CD4-positive, alpha-beta T cell (primary cell): ENCODE measurements at regions of chr3 and their contacts with region 1.

Region 1: GRCh38 chr3:99817437-99818240 is at the start of gene CMSS1:
- DNase-seq: peak; percentile 90 to 98 (median 96)
- ATAC-seq: peak; percentile 80
- H3K4me3 ChIP-seq: peak within 1 kb of the TSS; percentile 71
- H3K4me3 Mint-ChIP-seq: peak within 1 kb of the TSS; percentile 97
- H3K27ac ChIP-seq: peak within 1 kb of the TSS; percentile 76 to 86
- H3K27ac Mint-ChIP-seq: peak within 1 kb of the TSS; percentile 100
- H3K4me1 ChIP-seq: peaks cover 15% of the 10 kb centered on the region
- H3K4me1 Mint-ChIP-seq: peaks cover 48% of the 10 kb centered on the region
- H3K27me3 ChIP-seq: no peaks in the 10 kb centered on the region
- H3K27me3 Mint-ChIP-seq: no peaks in the 10 kb centered on the region
- CTCF ChIP-seq: no peak
- total RNA-seq, gene CMSS1: 12.2 TPM

Region 2: DNA sequence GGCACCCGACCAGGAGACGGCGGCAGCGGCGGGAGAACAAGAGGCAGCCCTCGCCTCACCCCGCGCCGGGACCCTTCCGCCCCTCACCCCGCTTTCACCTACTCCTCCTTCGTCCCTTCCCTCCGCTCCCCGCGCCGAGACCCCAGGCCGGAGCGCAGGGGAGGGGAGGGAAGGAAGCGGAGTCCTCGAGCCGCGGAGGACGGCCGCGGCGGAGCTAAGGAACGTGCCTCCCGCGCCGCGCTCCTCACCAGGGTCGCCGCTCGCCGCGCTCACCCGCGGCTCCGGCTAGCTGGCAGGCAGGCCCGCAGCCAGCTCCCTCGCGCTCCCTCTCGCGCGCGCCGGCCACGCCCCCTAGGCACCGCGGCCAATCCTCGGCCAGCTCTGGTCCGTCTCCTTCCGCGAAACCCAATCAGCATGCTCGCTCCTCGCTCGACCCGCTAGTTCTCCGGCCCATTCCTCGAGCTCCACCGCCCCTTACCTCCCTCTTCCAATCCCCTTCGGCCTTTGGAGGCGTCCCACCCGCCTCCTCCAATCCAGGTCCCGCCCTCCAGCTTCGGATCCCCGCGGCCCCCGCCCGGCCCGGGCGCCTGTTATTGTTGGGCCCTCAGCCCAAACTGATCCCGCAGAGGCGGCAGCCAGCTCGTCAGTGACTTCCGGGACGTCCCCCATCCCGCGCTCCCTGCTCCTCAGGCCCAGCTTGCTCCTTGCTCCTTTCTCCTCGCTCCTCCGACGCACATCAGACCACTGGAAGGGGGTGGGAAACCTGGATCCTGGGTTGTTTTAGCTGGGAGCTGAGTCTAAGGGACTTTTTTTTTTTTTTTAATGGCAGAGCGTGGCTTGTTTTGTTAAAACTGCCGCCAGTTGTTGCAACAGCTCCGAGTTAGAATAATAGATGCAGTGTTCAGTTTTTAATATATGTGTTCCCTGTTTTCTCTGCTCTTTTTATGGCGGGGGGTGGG is 916.0 kb before region 1 on chr3 and contains the start of gene DCBLD2:
- CTCF ChIA-PET with region 1: no interaction called
- POLR2A ChIA-PET with region 1: interaction called, 6 read pairs
- intact Hi-C with region 1: loop called (anchors 5 kb)
- DNase-seq: peak; percentile 79 to 96 (median 88)
- ATAC-seq: peak; percentile 98
- H3K4me3 ChIP-seq: peak within 1 kb of the TSS; percentile 67
- H3K4me3 Mint-ChIP-seq: peak within 1 kb of the TSS; percentile 93
- H3K27ac ChIP-seq: peak within 1 kb of the TSS in 1 of 2 donors; percentile 45
- H3K27ac Mint-ChIP-seq: peak within 1 kb of the TSS; percentile 76
- H3K4me1 ChIP-seq: peaks cover 13% of the 10 kb centered on the region
- H3K4me1 Mint-ChIP-seq: peaks cover 26% of the 10 kb centered on the region
- H3K27me3 ChIP-seq: peaks cover 0 to 2% of the 10 kb centered on the region in 2 experiments
- H3K27me3 Mint-ChIP-seq: peaks cover 12% of the 10 kb centered on the region
- CTCF ChIP-seq: no peak
- total RNA-seq, gene DCBLD2: 2.2 to 2.5 TPM

Region 3: DNA sequence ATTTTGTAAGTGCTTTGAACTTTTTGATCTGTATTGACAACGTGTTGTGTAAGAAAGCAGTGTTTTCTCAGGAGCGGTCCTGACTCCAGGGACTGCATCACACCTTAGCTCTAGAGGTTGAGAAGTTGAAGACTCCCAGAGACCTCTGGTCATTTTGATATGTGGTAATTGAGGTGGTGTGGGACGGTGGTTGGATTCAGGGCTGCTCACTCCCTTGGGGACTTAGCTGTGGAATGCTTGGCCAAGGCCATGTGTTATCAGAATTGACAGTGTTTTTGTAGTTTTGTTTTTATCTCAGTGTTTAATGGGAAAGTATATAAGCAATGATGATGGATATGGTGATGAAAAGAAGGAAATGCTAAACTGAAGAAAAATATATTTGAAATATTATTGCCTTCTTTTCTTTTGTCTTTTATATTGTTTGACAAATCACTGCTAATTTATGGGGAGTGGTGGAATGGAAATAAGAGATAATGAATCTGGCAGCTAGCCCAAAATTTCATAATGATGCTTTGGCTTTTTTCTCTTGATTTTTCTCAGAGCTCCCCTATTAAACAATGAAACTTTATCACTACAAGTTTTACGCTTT is 16.1 kb after region 1 on chr3:
- CTCF ChIA-PET with region 1: interaction called, 11 read pairs
- POLR2A ChIA-PET with region 1: interaction called, 6 read pairs
- intact Hi-C with region 1: loop called in 1 of 2 experiments (anchors 1 kb)
- DNase-seq: no peak
- ATAC-seq: no peak
- H3K4me3 ChIP-seq: no peak overlapping the region
- H3K4me3 Mint-ChIP-seq: no peak overlapping the region
- H3K27ac ChIP-seq: no peak overlapping the region
- H3K27ac Mint-ChIP-seq: no peak overlapping the region
- H3K4me1 ChIP-seq: no peaks in the 10 kb centered on the region
- H3K4me1 Mint-ChIP-seq: no peaks in the 10 kb centered on the region
- H3K27me3 ChIP-seq: no peaks in the 10 kb centered on the region
- H3K27me3 Mint-ChIP-seq: no peaks in the 10 kb centered on the region
- CTCF ChIP-seq: no peak

Region 4: DNA sequence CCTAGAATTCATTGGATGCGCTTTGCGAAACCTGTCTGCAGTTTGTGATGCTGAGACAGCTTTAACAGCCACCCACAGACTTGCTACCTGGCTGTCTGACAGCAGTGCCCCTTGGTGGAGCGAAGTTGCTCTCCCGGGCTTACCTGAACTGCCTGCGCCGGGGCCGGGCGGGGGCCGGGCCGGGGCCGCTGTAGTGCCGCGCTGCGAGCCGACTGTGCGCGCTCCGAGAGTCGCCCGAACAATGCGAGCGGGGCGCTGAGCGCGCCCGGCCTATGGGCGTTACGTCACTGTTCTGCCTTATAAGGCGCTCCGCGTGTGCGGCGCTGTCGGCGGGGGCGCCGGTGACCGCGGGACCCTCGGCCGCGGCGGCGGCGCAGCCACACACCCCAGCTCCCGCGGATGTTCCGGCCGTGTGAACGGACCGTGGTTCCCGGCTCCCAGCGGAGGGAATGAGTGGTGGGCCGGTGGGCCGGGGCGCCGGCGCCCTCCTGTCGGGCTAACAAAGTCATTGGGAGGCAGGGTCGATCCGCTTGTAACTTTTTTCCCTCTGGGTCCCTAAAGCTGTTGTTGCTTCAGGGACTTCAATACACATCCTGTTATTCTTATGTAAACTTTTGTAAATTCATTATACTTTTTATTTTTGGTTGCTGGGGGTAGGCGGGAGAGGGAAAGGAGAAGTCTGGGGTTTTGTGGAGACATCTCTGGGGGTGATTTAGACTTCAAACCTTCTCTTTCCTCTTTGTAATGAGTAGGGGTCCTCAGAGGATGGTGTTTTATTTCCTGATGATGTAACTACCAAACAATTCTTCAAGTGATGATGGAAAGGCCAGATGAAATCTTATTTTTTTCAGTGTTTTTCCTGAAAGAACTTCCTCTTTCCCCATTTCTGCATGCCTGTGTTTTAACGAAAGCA is 58.5 kb after region 1 on chr3:
- CTCF ChIA-PET with region 1: no interaction called
- POLR2A ChIA-PET with region 1: interaction called, 4 read pairs
- intact Hi-C with region 1: loop called (anchors 5 kb)
- DNase-seq: peak; percentile 38 to 86 (median 57)
- ATAC-seq: peak; percentile 95
- H3K4me3 ChIP-seq: peak overlapping the region; percentile 61
- H3K4me3 Mint-ChIP-seq: peak overlapping the region; percentile 83
- H3K27ac ChIP-seq: no peak overlapping the region
- H3K27ac Mint-ChIP-seq: peak overlapping the region; percentile 64
- H3K4me1 ChIP-seq: peaks cover 5% of the 10 kb centered on the region
- H3K4me1 Mint-ChIP-seq: peaks cover 32% of the 10 kb centered on the region
- H3K27me3 ChIP-seq: no peaks in the 10 kb centered on the region
- H3K27me3 Mint-ChIP-seq: no peaks in the 10 kb centered on the region
- CTCF ChIP-seq: no peak

Region 5: GRCh38 chr3:99895703-99896441 is 78.2 kb after region 1 on chr3:
- CTCF ChIA-PET with region 1: no interaction called
- POLR2A ChIA-PET with region 1: no interaction called
- intact Hi-C with region 1: no loop called
- DNase-seq: peak in 3 of 14 experiments; percentile 12 to 55 (median 41)
- ATAC-seq: no peak
- H3K4me3 ChIP-seq: no peak overlapping the region
- H3K4me3 Mint-ChIP-seq: no peak overlapping the region
- H3K27ac ChIP-seq: no peak overlapping the region
- H3K27ac Mint-ChIP-seq: no peak overlapping the region
- H3K4me1 ChIP-seq: no peaks in the 10 kb centered on the region
- H3K4me1 Mint-ChIP-seq: peaks cover 15% of the 10 kb centered on the region
- H3K27me3 ChIP-seq: no peaks in the 10 kb centered on the region
- H3K27me3 Mint-ChIP-seq: no peaks in the 10 kb centered on the region
- CTCF ChIP-seq: no peak

Region 6: DNA sequence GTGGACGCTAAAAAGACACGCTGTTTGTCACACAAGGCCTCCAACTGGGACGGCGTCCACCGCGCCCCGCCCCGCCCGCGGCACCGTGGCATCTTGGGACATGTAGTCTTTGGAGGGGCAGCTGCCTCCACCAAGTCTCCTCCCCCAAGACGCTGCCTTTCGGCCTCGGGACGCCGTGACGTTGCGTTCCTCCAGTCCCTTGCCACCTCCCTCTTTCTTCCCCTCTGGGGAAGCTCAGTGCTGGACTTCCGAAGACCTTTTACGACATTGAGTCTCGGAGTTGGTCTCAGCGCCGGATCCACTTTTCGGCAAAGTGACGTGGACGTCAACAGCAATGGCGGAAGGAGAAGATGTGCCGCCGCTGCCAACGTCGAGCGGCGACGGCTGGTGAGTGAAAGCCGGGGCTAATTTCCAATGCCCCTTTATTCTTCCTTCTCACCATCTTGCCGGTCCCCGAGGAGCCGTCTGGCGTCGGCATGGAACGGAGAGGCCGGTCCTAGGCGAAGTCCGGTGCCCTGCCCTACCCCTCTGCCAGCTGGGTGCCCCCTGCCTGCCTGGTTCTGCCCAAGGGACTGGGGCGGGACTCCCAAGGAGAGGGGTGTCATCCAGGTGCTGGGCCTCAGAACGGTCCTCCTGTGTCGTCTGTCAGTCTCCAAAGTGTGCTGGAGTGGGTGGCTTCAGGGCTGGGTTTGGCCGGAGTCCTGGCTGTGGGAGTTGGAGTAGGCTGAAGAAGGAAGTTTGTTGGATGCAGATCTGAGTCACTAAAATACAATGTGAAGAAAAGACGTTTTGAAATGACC is 443.2 kb after region 1 on chr3 and contains the start of gene TBC1D23:
- CTCF ChIA-PET with region 1: no interaction called
- POLR2A ChIA-PET with region 1: interaction called, 21 read pairs
- intact Hi-C with region 1: loop called (anchors 5 kb)
- DNase-seq: peak; percentile 93 to 99 (median 96)
- ATAC-seq: peak; percentile 99
- H3K4me3 ChIP-seq: peak within 1 kb of the TSS; percentile 96
- H3K4me3 Mint-ChIP-seq: peak within 1 kb of the TSS; percentile 96
- H3K27ac ChIP-seq: peak within 1 kb of the TSS; percentile 78 to 97
- H3K27ac Mint-ChIP-seq: peak within 1 kb of the TSS; percentile 94
- H3K4me1 ChIP-seq: peaks cover 26% of the 10 kb centered on the region
- H3K4me1 Mint-ChIP-seq: peaks cover 64% of the 10 kb centered on the region
- H3K27me3 ChIP-seq: no peaks in the 10 kb centered on the region
- H3K27me3 Mint-ChIP-seq: no peaks in the 10 kb centered on the region
- CTCF ChIP-seq: no peak
- total RNA-seq, gene TBC1D23: 31.8 to 34.8 TPM